A549 (cell line): ENCODE measurements at regions of chr14 and their contacts with region 1.

Region 1: DNA sequence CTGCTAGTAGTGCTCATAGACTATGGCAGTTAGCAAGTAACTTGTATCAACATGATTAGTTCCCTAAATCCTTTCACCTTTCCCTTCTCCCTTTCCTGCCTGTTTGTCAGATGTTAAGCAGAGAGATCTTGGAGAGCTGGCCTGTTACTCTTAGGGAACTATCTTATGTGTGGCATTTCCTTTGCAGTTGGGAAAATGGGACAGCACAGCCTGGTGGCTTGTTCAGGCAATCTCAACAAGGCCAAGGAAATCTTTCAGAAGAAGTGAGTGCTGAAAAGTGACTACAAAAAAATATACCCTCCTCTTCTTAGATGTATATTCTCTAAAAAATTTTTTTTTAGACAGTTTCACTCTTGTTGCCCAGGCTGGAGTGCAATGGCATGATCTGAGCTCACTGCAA is 7.4 kb downstream of the PARP2 start:
- DNase-seq: no peak
- ATAC-seq: peak; percentile 45 to 68; a peak in 3 of 6 replicates
- H3K4me3 ChIP-seq: no peak overlapping the region
- H3K27ac ChIP-seq: no peak overlapping the region
- H3K4me1 ChIP-seq: no peaks in the 10 kb centered on the region
- CTCF ChIP-seq: no peak
- EP300 ChIP-seq: no peak
- POLR2A ChIP-seq: no peak
- RAD21 ChIP-seq: 0 out of 5 replicates have a peak, but pooled peaks of 1 of the 2 experiments have one; percentile 2

Region 2: DNA sequence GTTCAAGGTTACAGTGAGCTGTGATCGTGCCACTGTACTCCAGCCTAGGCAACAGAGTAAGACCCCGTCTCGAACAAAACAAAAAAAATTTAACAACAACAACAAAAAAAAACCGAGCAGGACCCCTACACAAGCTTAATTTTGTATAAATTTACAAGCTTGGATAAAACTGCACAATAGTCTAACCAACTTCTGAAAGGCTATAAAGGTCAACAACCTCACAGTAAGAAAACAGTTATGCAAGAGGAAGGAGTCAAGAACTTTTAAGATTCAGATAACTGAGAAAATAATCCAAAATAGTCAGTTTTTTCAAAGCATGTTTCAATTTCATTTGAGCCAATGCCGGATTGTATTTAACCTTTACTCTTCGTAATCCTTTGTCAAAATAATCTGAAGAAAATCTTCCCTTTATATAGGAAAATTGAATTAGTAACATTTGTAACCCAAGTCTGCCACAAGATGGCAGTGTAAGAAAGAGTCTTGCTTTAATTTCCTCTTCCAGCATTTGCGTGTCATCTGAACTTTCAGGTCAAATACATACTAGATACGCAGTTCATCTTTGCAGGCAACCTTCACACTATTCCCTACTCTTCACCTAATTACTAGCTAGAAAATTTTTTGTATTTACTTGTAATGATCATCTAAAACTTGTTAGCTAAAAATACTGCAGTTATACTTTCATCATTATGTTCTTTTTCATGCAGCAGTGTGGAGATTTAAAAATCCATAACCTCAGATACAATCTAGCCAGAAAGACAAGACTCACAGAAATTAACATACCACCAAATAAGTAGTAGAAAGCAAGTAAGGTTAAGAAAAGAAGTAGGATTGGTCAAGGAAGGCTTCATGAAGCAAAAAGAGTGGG is 23.6 kb before region 1 on chr14:
- CTCF ChIA-PET with region 1: interaction called, 13 read pairs
- POLR2A ChIA-PET with region 1: no interaction called
- DNase-seq: peak; percentile 55 to 74
- ATAC-seq: peak in 1 of 2 experiments; percentile 61; a peak in 3 of 6 replicates
- H3K4me3 ChIP-seq: no peak overlapping the region
- H3K27ac ChIP-seq: no peak overlapping the region
- H3K4me1 ChIP-seq: peaks cover 35% of the 10 kb centered on the region
- CTCF ChIP-seq: peak; percentile 86
- EP300 ChIP-seq: no peak
- POLR2A ChIP-seq: no peak
- RAD21 ChIP-seq: peak; percentile 66 to 73